ENCODE measurements at regions of chr4 and their contacts with region 1.

Region 1: DNA sequence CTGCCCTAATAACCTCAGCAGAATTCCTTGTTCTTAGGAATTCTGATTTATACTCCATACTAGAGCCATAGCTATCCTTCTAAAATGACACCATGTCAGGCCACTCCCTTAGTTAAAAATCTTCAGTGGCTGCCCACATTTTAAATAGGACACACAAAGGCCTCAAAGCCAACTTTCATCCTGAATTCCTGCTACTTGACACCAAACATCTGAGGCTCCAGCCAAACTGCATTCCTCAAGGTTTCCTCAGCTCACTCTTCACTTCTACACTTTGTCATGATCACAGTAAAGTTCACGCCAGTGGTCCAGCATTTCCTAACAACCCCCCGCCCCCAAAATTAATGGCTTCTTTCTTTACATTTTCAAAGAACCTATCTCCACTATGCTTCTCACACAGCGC is 124.3 kb downstream of the ADGRA3 start:
- DNase-seq: no peak
- H3K4me3 ChIP-seq: no peak overlapping the region
- H3K27ac ChIP-seq: no peak overlapping the region
- H3K4me1 ChIP-seq: no peaks in the 10 kb centered on the region
- H3K27me3 ChIP-seq: no peaks in the 10 kb centered on the region
- CTCF ChIP-seq: no peak
- EP300 ChIP-seq: no peak
- POLR2A ChIP-seq: no peak

Region 2: DNA sequence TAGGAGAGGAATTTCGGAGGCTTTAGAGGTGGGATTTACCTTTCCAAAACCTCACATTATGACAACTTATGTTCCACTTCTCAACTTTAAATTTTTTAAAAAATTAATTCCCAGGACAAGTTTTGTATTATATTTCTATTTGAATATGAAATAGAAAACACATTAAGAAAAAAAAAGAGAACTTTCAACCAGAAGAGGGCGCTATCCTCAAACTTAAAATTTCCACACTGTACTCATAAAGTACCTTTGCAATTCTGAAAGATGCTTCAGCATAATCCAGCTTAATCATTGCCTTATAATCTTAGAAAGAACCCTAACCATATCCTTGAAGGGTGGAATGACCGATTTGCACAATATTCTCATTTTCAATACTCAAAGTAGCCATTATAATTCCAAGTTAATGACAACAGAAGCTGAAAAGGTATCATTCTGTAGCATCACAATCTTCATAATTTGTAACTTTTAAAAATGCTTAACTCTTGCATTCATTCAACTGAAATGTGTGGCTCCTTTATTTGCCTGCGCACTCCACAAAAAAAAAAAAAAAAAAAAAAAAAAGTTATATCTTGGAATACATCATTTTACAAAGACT is 601.0 kb before region 1 on chr4:
- intact Hi-C with region 1: loop called (anchors 10 kb)
- DNase-seq: peak in 1 of 2 donors; percentile 44
- H3K4me3 ChIP-seq: no peak overlapping the region
- H3K27ac ChIP-seq: no peak overlapping the region
- H3K4me1 ChIP-seq: no peaks in the 10 kb centered on the region
- H3K27me3 ChIP-seq: no peaks in the 10 kb centered on the region
- CTCF ChIP-seq: peak in 4 of 7 experiments; percentile 5 to 38 (median 25)
- EP300 ChIP-seq: no peak
- POLR2A ChIP-seq: no peak

Region 3: DNA sequence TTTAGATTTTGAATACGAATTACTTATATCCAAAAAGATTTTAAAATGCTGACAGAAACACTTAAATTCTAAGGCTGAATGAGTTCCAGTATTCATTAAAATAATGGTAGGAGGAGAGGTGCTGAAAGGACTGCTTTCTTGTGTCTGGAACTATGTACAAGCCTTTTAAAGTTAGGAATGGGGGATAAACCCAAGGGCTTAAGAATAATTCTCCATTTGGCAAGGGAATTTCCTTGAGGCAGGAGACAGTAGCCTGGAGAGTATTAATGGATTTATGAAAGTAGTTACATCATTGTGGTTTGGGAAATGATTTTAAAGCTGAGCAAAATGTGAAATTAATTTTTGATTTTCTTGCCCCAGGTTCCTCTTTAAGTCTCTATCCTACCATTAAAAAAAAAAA is 176.5 kb before region 1 on chr4:
- intact Hi-C with region 1: no loop called
- DNase-seq: no peak
- H3K4me3 ChIP-seq: no peak overlapping the region
- H3K27ac ChIP-seq: no peak overlapping the region
- H3K4me1 ChIP-seq: no peaks in the 10 kb centered on the region
- H3K27me3 ChIP-seq: no peaks in the 10 kb centered on the region
- CTCF ChIP-seq: no peak
- EP300 ChIP-seq: no peak
- POLR2A ChIP-seq: no peak

Region 4: GRCh38 chr4:22522206-22522605 is 130.7 kb after region 1 on chr4:
- intact Hi-C with region 1: no loop called
- DNase-seq: no peak
- H3K4me3 ChIP-seq: no peak overlapping the region
- H3K27ac ChIP-seq: no peak overlapping the region
- H3K4me1 ChIP-seq: no peaks in the 10 kb centered on the region
- H3K27me3 ChIP-seq: no peaks in the 10 kb centered on the region
- CTCF ChIP-seq: no peak
- EP300 ChIP-seq: no peak
- POLR2A ChIP-seq: no peak

Measured in stomach (tissue), 19 donors.